ENCODE measurements at regions of chr12 and their contacts with region 1.

Region 1: GRCh38 chr12:94435511-94435927 is 24.1 kb downstream of the CEP83 start:
- DNase-seq: no peak
- ATAC-seq: no peak
- H3K4me3 ChIP-seq: no peak overlapping the region
- H3K27ac ChIP-seq: no peak overlapping the region
- H3K4me1 ChIP-seq: no peaks in the 10 kb centered on the region
- H3K27me3 ChIP-seq: no peaks in the 10 kb centered on the region

Region 2: GRCh38 chr12:94133964-94134795 is 301.3 kb before region 1 on chr12:
- intact Hi-C with region 1: loop called in 1 of 2 experiments (anchors 5 kb)
- DNase-seq: no peak
- ATAC-seq: peak; percentile 67
- H3K4me3 ChIP-seq: no peak overlapping the region
- H3K27ac ChIP-seq: no peak overlapping the region
- H3K4me1 ChIP-seq: no peaks in the 10 kb centered on the region
- H3K27me3 ChIP-seq: no peaks in the 10 kb centered on the region

Region 3: DNA sequence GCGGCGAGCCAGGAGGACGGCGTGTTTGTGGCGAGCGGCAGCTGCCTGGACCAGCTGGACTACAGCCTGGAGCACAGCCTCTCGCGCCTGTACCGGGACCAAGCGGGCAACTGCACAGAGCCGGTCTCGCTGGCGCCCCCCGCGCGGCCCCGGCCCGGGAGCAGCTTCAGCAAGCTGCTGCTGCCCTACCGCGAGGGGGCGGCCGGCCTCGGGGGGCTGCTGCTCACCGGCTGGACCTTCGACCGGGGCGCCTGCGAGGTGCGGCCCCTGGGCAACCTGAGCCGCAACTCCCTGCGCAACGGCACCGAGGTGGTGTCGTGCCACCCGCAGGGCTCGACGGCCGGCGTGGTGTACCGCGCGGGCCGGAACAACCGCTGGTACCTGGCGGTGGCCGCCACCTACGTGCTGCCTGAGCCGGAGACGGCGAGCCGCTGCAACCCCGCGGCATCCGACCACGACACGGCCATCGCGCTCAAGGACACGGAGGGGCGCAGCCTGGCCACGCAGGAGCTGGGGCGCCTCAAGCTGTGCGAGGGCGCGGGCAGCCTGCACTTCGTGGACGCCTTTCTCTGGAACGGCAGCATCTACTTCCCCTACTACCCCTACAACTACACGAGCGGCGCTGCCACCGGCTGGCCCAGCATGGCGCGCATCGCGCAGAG is 286.3 kb before region 1 on chr12:
- intact Hi-C with region 1: loop called in 1 of 2 experiments (anchors 10 kb)
- DNase-seq: peak; percentile 69 to 82
- ATAC-seq: peak; percentile 8
- H3K4me3 ChIP-seq: peak overlapping the region; percentile 42 to 55
- H3K27ac ChIP-seq: no peak overlapping the region
- H3K4me1 ChIP-seq: no peaks in the 10 kb centered on the region
- H3K27me3 ChIP-seq: no peaks in the 10 kb centered on the region